CD4-positive, alpha-beta memory T cell (primary cell): ENCODE measurements at regions of chr4 and their contacts with region 1.

Region 1: DNA sequence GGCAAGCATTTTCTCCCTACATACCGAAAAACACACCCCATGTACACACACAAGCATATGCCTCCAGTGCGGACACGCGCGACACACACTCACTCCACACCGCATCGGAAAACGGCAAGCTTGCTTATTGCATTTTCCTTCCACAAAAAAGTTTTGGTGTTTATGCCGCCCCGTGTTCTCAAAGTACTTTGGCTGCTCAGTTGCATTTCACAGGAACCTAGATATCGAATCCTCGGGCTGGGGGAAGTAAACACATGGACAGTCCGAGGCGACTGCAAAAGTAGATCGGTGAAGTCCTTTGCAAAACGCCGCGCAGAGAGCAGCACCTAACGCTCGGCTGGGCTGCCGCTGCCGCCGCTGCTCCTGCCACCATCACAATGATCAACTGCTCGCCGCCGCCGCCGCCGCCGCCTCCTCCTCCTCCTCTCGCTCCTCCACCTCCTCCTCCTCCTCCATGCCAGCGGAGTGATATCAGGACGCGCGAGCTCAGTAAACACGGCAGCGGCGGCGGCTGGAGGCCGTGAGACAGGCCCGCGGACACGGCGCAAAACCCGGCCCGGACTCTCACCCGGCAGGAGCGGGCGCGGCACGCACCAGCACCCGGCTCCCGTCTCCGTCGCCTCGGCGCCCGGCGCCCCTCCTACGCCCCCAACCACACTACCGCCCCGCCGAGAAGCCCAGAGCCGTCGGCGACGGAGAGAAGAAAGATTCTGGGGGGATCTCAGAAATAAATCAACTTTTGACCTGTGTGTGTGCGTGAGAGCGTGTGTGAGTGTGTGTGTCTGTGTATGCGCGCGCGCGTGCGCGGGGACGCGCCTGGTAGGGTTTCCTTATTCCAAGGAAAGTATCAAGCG is at the start of gene MAML3:
- DNase-seq: peak; percentile 83 to 90 (median 86)
- H3K4me3 ChIP-seq: peak within 1 kb of the TSS; percentile 71 to 88
- H3K4me3 Mint-ChIP-seq: peak within 1 kb of the TSS; percentile 87 to 99 (median 95)
- H3K27ac ChIP-seq: peak within 1 kb of the TSS; percentile 4
- H3K27ac Mint-ChIP-seq: peak within 1 kb of the TSS; percentile 78 to 97 (median 92)
- H3K4me1 ChIP-seq: peaks cover 36% of the 10 kb centered on the region
- H3K4me1 Mint-ChIP-seq: peaks cover 21 to 57% (median 32%) of the 10 kb centered on the region in 4 donors
- H3K27me3 ChIP-seq: no peaks in the 10 kb centered on the region
- H3K27me3 Mint-ChIP-seq: peaks cover 0 to 1% of the 10 kb centered on the region in 2 donors
- total RNA-seq, gene MAML3: 2.9 to 3.7 TPM

Region 2: GRCh38 chr4:139301113-139301820 is 852.7 kb before region 1 on chr4 and contains the start of gene NAA15:
- CTCF ChIA-PET with region 1: no interaction called
- POLR2A ChIA-PET with region 1: no interaction called
- intact Hi-C with region 1: loop called (anchors 1 kb)
- DNase-seq: peak; percentile 97 to 99 (median 97)
- H3K4me3 ChIP-seq: peak within 1 kb of the TSS; percentile 69 to 94
- H3K4me3 Mint-ChIP-seq: peak within 1 kb of the TSS; percentile 96 to 100 (median 99)
- H3K27ac ChIP-seq: peak within 1 kb of the TSS; percentile 98
- H3K27ac Mint-ChIP-seq: peak within 1 kb of the TSS; percentile 94 to 100 (median 99)
- H3K4me1 ChIP-seq: peaks cover 56% of the 10 kb centered on the region
- H3K4me1 Mint-ChIP-seq: peaks cover 22 to 73% (median 43%) of the 10 kb centered on the region in 4 donors
- H3K27me3 ChIP-seq: no peaks in the 10 kb centered on the region
- H3K27me3 Mint-ChIP-seq: no peaks in the 10 kb centered on the region
- total RNA-seq, gene NAA15: 45.8 to 46.5 TPM

Region 3: DNA sequence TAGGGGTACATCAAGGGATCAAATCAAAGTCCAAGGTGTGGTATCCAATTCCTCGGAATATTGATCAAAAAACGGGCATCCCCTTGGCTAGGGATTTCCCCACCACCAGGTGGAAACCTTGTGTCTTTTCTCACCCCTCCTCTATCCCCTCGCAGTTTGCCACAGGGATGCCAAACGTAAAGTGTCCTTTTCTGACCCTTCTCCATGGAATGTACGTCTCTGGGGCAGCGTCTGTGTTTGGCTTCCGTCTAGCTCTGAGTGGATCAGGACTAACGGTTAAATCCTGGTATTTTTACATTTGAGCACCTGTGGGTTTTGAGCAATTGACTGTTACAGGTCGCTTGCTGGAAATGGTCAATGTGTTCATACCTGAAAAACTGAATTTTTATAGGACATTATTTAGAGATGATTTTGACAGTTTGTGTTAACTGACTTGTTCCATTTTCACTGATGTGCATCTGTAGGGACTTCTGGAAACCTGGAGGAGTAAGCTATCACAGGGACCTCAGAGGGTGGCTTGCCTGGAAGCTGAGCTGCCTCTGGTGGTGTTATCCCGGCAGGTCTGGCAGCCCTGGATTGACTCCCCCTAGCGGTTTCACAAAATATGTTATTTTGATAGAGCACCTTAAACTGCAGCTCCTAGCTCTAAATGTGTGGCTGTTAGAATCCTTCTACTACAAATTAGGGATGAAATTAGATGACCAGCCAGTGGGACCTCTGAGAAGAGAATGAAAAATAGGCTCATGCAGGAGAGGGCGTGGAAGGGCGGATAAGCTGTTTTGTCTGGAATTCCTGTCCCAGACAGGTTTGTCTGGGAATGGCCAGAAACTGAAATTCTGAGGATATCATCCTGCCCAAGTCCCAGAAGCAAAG is 497.1 kb before region 1 on chr4:
- CTCF ChIA-PET with region 1: interaction called, 3 read pairs
- POLR2A ChIA-PET with region 1: no interaction called
- intact Hi-C with region 1: loop called (anchors 2 kb)
- DNase-seq: peak; percentile 59 to 65 (median 62)
- H3K4me3 ChIP-seq: no peak overlapping the region
- H3K4me3 Mint-ChIP-seq: peak overlapping the region in 6 of 8 donors; percentile 23 to 75 (median 72)
- H3K27ac ChIP-seq: no peak overlapping the region
- H3K27ac Mint-ChIP-seq: peak overlapping the region in 6 of 7 donors; percentile 13 to 88 (median 68)
- H3K4me1 ChIP-seq: peaks cover 18% of the 10 kb centered on the region
- H3K4me1 Mint-ChIP-seq: peaks cover 15 to 26% (median 20%) of the 10 kb centered on the region in 4 donors
- H3K27me3 ChIP-seq: no peaks in the 10 kb centered on the region
- H3K27me3 Mint-ChIP-seq: peaks cover 0 to 2% of the 10 kb centered on the region in 2 donors

Region 4: DNA sequence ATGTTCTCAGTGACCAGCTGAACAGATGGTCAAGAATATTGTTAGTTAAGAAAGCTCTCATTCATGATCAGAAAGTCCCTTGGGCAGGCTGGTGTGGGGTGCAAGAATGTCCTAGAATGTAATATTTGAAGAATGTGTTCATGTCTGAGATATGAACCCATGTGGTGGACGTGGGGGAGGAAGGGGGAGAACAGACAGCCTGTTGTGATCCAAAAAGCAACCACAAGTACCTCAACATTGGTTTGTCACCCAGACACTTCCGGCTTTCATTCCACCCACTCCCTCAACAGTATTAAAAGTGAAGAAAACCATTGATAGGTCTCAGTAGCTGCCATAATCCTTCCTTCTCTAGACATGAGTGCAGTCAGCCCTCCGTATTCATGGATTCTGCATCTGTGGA is 82.1 kb before region 1 on chr4:
- CTCF ChIA-PET with region 1: interaction called, 12 read pairs
- POLR2A ChIA-PET with region 1: interaction called, 17 read pairs
- intact Hi-C with region 1: loop called (anchors 1 kb)
- DNase-seq: peak; percentile 54 to 81 (median 66)
- H3K4me3 ChIP-seq: no peak overlapping the region
- H3K4me3 Mint-ChIP-seq: peak overlapping the region; percentile 23 to 85 (median 67)
- H3K27ac ChIP-seq: no peak overlapping the region
- H3K27ac Mint-ChIP-seq: peak overlapping the region in 5 of 7 donors; percentile 70 to 86 (median 72)
- H3K4me1 ChIP-seq: peaks cover 27% of the 10 kb centered on the region
- H3K4me1 Mint-ChIP-seq: peaks cover 27 to 39% (median 33%) of the 10 kb centered on the region in 4 donors
- H3K27me3 ChIP-seq: no peaks in the 10 kb centered on the region
- H3K27me3 Mint-ChIP-seq: peaks cover 0 to 2% of the 10 kb centered on the region in 2 donors

Region 5: DNA sequence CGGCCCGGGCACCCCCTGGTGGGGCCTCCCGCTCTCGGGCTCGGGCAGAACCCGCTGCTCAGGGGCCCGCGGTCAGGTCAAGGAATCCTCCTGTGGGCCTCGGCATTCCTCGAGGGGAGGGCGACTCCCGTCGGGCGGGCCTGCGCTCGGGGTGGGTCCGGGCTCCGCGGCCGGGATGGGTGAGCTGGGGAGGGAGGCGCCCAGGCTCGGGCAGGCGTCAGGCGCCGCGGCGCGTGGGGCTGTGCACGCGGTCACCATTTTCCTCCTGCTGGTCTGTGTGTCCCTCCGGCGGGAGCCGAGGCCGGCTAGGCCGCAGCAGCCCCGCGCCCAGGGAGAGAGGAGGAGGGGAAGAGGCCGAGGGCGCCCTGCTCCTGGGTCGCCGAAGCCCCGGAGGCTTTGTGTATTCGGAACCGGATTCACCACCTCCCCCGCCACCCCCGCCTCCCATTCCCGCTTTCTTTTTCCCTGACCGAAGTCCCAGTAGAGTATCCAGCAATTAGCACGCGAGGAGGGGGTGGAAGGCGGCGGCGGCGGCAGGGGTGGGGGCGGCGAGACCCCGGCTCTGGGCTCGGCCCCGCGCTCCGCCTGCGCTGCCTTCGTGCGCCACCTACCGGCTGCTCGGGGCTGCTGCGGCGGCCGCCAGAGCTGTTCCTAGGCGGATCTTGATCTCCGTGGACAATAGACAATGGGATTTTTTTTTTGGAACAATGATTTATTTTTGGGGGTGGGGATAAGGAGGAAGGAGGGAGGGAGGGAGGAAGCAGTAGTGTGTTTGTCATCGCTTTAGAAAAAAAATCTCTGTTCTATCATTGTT is 99.0 kb after region 1 on chr4:
- CTCF ChIA-PET with region 1: interaction called, 4 read pairs
- POLR2A ChIA-PET with region 1: interaction called, 5 read pairs
- intact Hi-C with region 1: loop called (anchors 1 kb)
- DNase-seq: peak; percentile 41 to 64 (median 47)
- H3K4me3 ChIP-seq: peak overlapping the region in 1 of 2 donors; percentile 26
- H3K4me3 Mint-ChIP-seq: peak overlapping the region; percentile 68 to 87 (median 78)
- H3K27ac ChIP-seq: no peak overlapping the region
- H3K27ac Mint-ChIP-seq: peak overlapping the region in 2 of 7 donors; percentile 8 to 37
- H3K4me1 ChIP-seq: no peaks in the 10 kb centered on the region
- H3K4me1 Mint-ChIP-seq: peaks cover 0 to 6% (median 2%) of the 10 kb centered on the region in 4 donors
- H3K27me3 ChIP-seq: peaks cover 5% of the 10 kb centered on the region
- H3K27me3 Mint-ChIP-seq: peaks cover 5 to 8% of the 10 kb centered on the region in 2 donors